Activated CD4-positive, alpha-beta memory T cell treated with anti-CD3 and anti-CD28 coated beads for 36 hours (primary cell): ENCODE measurements at regions of chr3 and their contacts with region 1.

Region 1: GRCh38 chr3:180601688-180602666 is at the start of gene TTC14:
- DNase-seq: peak; percentile 96
- H3K4me3 Mint-ChIP-seq: peak within 1 kb of the TSS; percentile 92
- H3K27ac Mint-ChIP-seq: peak within 1 kb of the TSS; percentile 95
- H3K4me1 Mint-ChIP-seq: peaks cover 19% of the 10 kb centered on the region
- H3K27me3 Mint-ChIP-seq: peaks cover 3% of the 10 kb centered on the region
- total RNA-seq, gene TTC14: 43.9 to 44.4 TPM

Region 2: DNA sequence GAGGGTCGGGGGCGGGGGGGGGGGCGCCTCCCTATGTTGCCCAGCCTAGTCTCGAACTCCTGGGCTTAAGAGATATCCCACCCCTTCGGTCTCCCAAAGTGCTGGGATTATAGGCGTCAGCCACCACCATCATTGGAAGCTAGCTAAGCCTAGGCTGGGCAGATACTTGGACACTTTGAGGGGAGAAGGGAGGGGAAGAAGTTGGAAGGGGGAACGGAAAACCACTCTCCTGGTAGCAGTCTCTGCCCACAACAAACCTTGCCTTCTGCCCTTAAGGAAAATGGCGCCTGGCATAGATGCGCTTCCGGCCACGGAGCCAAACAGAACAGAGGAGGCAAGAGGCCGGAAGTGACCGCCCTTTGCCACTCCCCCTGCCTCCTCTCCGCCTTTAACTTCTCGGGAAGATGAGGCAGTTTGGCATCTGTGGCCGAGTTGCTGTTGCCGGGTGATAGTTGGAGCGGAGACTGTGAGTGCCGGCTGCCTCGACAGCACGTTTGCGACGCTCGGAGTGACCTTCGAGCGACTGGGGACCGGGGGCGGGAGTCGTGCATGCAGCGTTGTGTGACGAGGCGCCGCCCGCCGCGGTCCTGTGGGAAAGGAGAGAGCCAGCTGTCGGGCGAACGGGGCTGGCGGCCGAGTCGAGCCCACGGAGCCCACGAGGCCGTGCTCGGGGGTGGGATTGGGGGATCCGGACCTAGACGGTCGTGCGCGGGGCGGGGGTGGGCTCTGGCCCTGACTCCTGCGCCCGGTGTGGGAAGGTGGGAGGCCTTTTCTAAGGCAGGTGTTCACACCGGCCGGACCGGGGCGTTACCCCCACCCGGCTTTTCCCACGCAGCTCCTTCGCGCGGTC is 1254.4 kb before region 1 on chr3 and contains the start of gene MFN1:
- CTCF ChIA-PET with region 1: no interaction called
- POLR2A ChIA-PET with region 1: no interaction called
- intact Hi-C with region 1: loop called (anchors 1 kb)
- DNase-seq: peak; percentile 94
- H3K4me3 Mint-ChIP-seq: peak within 1 kb of the TSS; percentile 98
- H3K27ac Mint-ChIP-seq: peak within 1 kb of the TSS; percentile 94
- H3K4me1 Mint-ChIP-seq: peaks cover 23% of the 10 kb centered on the region
- H3K27me3 Mint-ChIP-seq: no peaks in the 10 kb centered on the region
- total RNA-seq, gene MFN1: 31.1 to 31.3 TPM

Region 3: DNA sequence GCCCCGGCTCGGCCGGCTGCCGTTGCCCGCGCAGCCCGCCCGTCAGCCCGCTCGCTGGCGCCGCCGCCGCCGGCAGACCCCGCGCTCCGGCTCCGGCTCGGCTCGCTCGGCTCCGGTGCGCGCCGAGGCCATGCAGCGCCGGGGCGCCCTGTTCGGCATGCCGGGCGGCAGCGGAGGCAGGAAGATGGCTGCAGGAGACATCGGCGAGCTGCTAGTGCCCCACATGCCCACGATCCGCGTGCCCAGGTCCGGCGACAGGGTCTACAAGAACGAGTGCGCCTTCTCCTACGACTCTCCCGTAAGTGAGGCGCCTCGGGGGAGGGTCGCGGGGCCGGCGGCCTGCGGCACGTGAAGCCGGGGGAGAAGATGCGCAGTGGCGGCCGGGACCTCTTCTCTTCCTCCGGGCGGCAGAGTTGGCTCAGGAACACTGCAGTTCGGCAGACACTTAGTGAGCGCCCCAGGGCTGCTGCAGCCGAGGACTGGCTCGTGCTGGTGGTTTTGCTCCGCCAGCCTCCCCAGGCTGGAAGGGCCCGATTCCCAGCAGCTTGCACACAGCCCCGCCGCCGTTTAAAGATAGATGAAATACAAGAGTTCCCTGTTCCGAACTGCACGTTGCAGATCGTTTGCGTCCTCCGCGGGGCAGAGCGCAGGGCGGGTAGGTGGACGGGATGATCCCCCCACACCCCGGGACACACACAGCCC is 948.7 kb before region 1 on chr3:
- CTCF ChIA-PET with region 1: no interaction called
- POLR2A ChIA-PET with region 1: no interaction called
- intact Hi-C with region 1: loop called (anchors 2 kb)
- DNase-seq: peak; percentile 73
- H3K4me3 Mint-ChIP-seq: peak overlapping the region; percentile 90
- H3K27ac Mint-ChIP-seq: peak overlapping the region; percentile 71
- H3K4me1 Mint-ChIP-seq: peaks cover 27% of the 10 kb centered on the region
- H3K27me3 Mint-ChIP-seq: peaks cover 1% of the 10 kb centered on the region

Region 4: GRCh38 chr3:180624714-180625113 is 22.7 kb after region 1 on chr3:
- CTCF ChIA-PET with region 1: no interaction called
- POLR2A ChIA-PET with region 1: no interaction called
- intact Hi-C with region 1: loop called (anchors 1 kb)
- DNase-seq: no peak
- H3K4me3 Mint-ChIP-seq: no peak overlapping the region
- H3K27ac Mint-ChIP-seq: peak overlapping the region; percentile 72
- H3K4me1 Mint-ChIP-seq: peaks cover 22% of the 10 kb centered on the region
- H3K27me3 Mint-ChIP-seq: no peaks in the 10 kb centered on the region

Region 5: DNA sequence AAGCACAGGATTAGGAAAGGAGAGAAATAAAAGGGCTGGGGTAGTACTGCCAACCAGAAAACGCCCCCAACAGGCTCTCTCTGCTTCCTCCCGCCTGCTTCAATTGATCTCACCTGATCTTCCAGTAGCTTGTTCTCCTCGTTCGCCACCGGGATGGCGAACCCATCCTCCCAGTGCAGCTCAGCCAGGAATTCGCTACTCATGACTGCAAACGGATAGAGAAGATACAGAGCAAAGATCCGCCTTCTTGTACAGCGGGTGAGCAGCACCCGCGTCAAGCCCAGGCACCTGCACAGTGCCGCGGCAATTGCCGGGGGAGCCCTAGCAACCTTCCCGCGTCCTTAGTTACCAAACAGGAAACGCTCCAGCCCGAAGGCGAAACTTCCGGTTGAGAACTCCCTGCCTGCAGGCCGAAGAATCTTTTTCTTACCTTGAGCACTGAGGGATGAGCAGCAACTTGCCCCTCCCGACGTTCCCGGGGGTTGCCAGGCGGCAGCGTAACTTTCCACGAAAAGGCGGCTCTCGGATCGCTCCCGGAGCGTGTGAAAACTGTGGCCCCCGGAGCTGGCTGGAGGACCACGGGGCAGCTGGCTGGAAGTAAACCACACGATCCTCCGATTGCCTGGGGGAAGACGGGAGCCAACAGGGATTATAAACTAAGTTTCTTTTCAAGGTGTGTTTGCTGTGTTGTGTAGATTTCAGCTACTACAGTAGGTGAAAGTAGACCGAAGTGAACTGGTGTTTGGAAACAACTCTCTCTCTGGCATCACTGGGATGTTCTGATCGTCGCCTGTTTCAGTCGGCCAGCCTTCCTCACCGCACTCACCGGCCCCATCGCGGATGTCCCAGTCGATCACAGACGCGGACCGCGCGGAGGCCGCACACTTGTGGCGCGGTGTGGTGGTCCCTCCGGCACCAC is 77.5 kb after region 1 on chr3 and contains the start of gene CCDC39:
- CTCF ChIA-PET with region 1: interaction called, 3 read pairs
- POLR2A ChIA-PET with region 1: no interaction called
- intact Hi-C with region 1: loop called (anchors 1 kb)
- DNase-seq: peak; percentile 71
- H3K4me3 Mint-ChIP-seq: peak within 1 kb of the TSS; percentile 75
- H3K27ac Mint-ChIP-seq: no peak within 1 kb of the TSS
- H3K4me1 Mint-ChIP-seq: peaks cover 14% of the 10 kb centered on the region
- H3K27me3 Mint-ChIP-seq: peaks cover 27% of the 10 kb centered on the region
- total RNA-seq, gene CCDC39: not detected

Region 6: DNA sequence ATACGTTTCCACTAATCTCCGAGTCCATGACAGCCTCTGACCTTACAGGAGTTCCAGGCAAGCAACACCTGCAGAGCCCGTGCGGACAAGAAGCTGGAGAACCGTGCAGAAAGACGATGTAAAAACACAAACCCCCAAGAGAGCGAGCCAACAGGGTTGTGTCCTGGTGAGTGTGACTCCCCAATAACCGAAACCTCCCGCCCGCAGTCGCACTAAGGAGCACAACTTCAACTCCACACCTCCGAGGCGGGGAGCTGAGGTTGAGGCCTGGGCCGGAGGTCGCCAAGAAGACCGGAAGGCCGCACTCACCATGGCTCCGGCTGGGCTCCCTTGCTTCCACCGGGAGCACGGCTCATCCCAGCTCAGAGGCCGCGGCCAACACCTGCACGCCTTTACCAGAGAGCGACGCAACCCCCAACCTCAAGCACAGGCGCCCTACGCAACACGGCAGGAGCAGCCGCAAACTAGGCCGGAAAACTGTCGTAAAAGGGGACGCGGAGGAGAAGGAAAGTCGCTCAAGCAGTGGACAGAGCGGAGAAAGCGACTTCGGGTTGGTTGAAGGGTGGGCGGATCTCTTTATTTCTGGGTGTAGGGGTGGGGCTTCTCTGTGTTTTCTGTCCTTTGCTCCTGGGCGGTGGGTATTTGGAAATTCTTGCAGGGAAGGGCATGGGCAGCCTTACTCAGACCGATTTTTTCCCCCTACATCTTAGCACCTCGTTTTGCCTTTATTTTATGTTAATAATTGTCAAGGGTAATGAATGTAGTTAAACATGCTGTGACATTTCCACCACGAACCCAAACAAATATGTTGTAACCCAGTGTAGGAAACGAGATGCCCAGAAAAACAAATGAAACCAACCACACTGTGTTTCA is 387.6 kb after region 1 on chr3 and contains the start of gene DNAJC19:
- CTCF ChIA-PET with region 1: no interaction called
- POLR2A ChIA-PET with region 1: no interaction called
- intact Hi-C with region 1: loop called (anchors 2 kb)
- DNase-seq: peak; percentile 95
- H3K4me3 Mint-ChIP-seq: peak within 1 kb of the TSS; percentile 94
- H3K27ac Mint-ChIP-seq: peak within 1 kb of the TSS; percentile 93
- H3K4me1 Mint-ChIP-seq: peaks cover 31% of the 10 kb centered on the region
- H3K27me3 Mint-ChIP-seq: no peaks in the 10 kb centered on the region
- total RNA-seq, gene DNAJC19: 68.6 to 75.0 TPM